GM12878 (cell line): ENCODE measurements at regions of chr9 and their contacts with region 1.

Region 1: DNA sequence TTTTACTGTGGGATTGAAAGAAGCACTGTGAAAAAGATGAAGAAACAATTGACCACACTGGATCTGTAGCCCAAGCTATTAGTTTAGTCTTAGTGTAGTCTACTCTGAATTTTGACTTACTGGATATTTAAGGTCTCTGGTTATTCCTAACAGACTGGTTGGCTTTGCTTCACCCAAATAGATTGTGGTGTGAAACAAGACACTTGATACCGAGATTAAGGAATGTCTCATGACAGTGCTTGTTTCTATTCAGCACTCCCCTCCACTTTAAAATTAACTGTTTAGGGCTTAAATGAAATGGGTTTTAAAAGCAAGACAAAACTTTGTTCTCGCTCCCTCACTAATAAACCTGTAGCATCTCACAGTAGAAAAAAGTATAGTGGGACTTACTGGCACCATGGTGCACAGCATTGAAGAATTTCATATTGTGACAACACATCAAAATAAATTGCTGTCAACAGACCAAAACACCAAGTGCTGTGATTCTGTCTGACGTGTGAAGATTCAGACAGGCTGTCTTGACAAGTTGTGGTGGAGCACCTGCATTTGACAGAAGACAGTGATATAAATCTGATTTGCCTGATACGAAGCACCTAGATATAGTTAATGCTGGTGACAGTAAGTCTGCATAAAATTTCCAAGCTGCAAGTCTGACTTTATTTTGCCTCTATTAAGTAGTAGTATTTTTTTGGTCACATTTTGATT is 73.1 kb downstream of the PBX3 start:
- DNase-seq: no peak
- ATAC-seq: peak; percentile 41
- H3K4me3 ChIP-seq: peak overlapping the region; percentile 30; the same call in 1 of the 2 replicates
- H3K27ac ChIP-seq: peak overlapping the region; percentile 56; the same call in 1 of the 2 replicates
- H3K4me1 ChIP-seq: peaks cover 25% of the 10 kb centered on the region
- H3K27me3 ChIP-seq: no peaks in the 10 kb centered on the region
- CTCF ChIP-seq: no peak
- EP300 ChIP-seq: no peak
- POLR2A ChIP-seq: no peak
- RAD21 ChIP-seq: no peak

Region 2: GRCh38 chr9:125694478-125694877 is 125.8 kb before region 1 on chr9:
- CTCF ChIA-PET with region 1: no interaction called
- POLR2A ChIA-PET with region 1: no interaction called
- RAD21 ChIA-PET with region 1: no interaction called
- SMC1A ChIA-PET with region 1: no interaction called
- in situ Hi-C with region 1: no loop called
- intact Hi-C with region 1: loop called (anchors 2 kb)
- DNase-seq: no peak
- ATAC-seq: no peak
- H3K4me3 ChIP-seq: no peak overlapping the region
- H3K27ac ChIP-seq: no peak overlapping the region
- H3K4me1 ChIP-seq: peaks cover 3% of the 10 kb centered on the region; the same call in 1 of the 2 replicates
- H3K27me3 ChIP-seq: no peaks in the 10 kb centered on the region
- CTCF ChIP-seq: no peak
- EP300 ChIP-seq: no peak
- POLR2A ChIP-seq: no peak
- RAD21 ChIP-seq: no peak

Region 3: DNA sequence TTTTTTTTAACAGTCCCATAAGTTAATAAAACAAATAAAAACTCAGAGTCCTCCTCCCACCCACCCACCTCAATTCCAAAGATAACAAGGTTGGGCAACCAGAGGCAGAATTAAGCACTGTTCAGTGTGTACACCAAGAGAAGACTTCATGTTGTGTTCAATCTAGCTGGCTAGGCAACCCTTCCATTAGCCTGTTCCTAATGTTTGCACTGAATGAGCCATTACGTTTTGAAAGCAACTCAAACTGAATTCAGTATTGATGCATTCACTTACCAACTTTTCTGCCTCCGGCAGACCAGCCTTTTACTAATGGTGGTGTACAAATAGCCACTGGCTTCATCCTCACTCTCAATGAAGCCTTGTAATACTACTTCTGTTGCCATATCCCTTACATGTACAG is 25.5 kb before region 1 on chr9:
- CTCF ChIA-PET with region 1: interaction called, 3 read pairs
- POLR2A ChIA-PET with region 1: interaction called, 3 read pairs
- RAD21 ChIA-PET with region 1: interaction called, 23 read pairs
- SMC1A ChIA-PET with region 1: interaction called, 13 read pairs
- in situ Hi-C with region 1: no loop called
- intact Hi-C with region 1: no loop called
- DNase-seq: no peak
- ATAC-seq: peak; percentile 30
- H3K4me3 ChIP-seq: no peak overlapping the region
- H3K27ac ChIP-seq: no peak overlapping the region
- H3K4me1 ChIP-seq: no peaks in the 10 kb centered on the region
- H3K27me3 ChIP-seq: no peaks in the 10 kb centered on the region
- CTCF ChIP-seq: no peak
- EP300 ChIP-seq: no peak
- POLR2A ChIP-seq: no peak
- RAD21 ChIP-seq: no peak

Region 4: DNA sequence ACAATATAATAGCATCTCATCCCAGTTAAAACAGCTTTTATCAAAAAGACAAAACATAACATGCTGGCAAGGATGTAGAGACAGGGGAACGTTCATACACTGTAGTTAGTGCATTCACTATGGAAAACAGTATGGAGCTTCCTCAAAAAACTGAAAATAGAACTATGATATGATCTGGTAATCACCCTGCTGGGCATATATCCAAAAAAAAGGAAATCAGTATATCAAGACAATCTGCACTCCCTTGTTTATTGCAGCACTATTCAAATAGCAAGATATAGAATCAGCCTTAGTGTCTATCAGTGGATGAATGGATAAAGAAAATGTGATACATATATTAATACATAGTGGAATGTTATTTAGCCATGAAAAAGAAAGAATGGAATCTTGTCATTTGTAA is 15.4 kb after region 1 on chr9:
- CTCF ChIA-PET with region 1: interaction called, 10 read pairs
- POLR2A ChIA-PET with region 1: no interaction called
- RAD21 ChIA-PET with region 1: interaction called, 28 read pairs
- SMC1A ChIA-PET with region 1: interaction called, 41 read pairs
- in situ Hi-C with region 1: no loop called
- intact Hi-C with region 1: no loop called
- DNase-seq: no peak
- ATAC-seq: no peak
- H3K4me3 ChIP-seq: no peak overlapping the region
- H3K27ac ChIP-seq: no peak overlapping the region
- H3K4me1 ChIP-seq: no peaks in the 10 kb centered on the region; the same call in 1 of the 2 replicates
- H3K27me3 ChIP-seq: no peaks in the 10 kb centered on the region
- CTCF ChIP-seq: no peak
- EP300 ChIP-seq: no peak
- POLR2A ChIP-seq: no peak
- RAD21 ChIP-seq: no peak

Region 5: DNA sequence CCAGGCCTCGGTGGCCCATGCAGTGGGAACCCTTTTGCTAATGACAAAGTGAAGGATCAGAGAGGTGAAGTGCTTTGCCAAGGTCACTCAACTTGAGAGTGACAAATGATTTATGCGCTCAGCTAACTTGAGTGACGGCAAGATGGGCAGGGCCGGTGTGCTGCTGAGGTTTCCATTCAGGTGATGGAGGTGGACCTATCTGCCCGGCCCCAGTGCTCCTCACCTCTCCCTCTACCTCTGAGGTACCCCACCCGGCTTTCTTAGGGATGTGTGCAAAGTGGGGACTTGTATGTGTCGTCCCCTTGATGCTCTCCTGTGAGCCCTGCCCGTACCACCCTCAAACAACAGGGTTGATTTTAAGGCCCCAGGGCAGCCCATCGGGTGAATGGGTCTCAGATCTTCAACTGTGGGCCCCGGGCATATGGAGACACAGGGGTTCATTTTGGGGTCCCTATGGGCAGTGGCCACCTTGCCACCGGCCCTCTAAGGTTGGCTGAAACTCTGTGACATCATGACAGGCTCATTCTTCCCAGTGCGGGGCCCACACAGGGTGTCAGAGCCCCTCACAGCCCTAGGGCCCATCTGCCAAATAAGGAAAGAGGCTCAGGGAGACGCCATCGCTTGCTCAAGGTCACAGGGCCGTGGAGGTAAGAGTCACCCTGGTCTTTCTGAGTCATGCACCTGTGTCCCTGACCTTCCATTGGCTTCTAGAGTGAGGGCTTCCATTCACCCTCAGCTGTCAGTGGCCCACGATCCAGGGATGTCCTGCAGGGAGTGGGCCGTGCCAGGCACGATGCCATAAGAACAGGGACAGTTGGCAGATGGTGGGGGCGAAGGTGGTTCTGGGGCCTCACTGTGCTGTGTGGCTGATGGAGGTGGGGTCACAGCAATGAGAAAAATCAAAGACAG is 335.8 kb after region 1 on chr9:
- CTCF ChIA-PET with region 1: no interaction called
- POLR2A ChIA-PET with region 1: no interaction called
- RAD21 ChIA-PET with region 1: no interaction called
- SMC1A ChIA-PET with region 1: no interaction called
- in situ Hi-C with region 1: no loop called
- intact Hi-C with region 1: no loop called
- DNase-seq: no peak
- ATAC-seq: no peak
- H3K4me3 ChIP-seq: no peak overlapping the region
- H3K27ac ChIP-seq: no peak overlapping the region
- H3K4me1 ChIP-seq: no peaks in the 10 kb centered on the region
- H3K27me3 ChIP-seq: no peaks in the 10 kb centered on the region; a peak in 2 of 4 replicates
- CTCF ChIP-seq: no peak
- EP300 ChIP-seq: no peak
- POLR2A ChIP-seq: no peak
- RAD21 ChIP-seq: no peak